Panc1 (cell line): ENCODE measurements at regions of chr19 and their contacts with region 1.

Region 1: GRCh38 chr19:12484371-12485051 is at the start of gene ZNF709:
- DNase-seq: peak; percentile 47
- ATAC-seq: peak; percentile 99
- H3K4me3 ChIP-seq: peak within 1 kb of the TSS; percentile 80 to 89
- H3K27ac ChIP-seq: peak within 1 kb of the TSS; percentile 70
- H3K4me1 ChIP-seq: peaks cover 8% of the 10 kb centered on the region; the same call in 1 of the 2 replicates
- H3K27me3 ChIP-seq: no peaks in the 10 kb centered on the region
- CTCF ChIP-seq: no peak
- total RNA-seq, gene ZNF709: 4.0 TPM

Region 2: DNA sequence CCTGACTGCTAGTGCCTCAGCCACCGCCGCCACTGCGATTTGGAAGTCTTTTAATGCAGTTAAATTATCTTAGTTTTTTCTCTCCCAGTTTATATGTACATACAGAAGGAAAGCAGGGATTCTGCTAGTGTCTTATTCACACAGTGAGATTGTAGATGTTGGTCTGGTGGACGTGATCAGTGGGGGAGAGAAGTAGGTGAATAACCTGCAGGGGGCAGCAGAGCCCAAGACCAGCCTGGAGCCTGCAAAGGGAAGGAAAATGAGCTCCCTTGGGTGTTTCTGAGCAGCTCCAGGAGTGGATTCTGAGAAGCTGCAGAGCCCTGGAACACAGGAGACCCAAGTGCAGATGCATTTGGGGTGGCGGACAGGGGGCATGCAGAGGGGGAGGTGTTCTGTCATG is 393.7 kb before region 1 on chr19:
- CTCF ChIA-PET with region 1: no interaction called
- POLR2A ChIA-PET with region 1: interaction called, 14 read pairs
- in situ Hi-C with region 1: no loop called
- intact Hi-C with region 1: no loop called
- DNase-seq: peak; percentile 10
- ATAC-seq: peak; percentile 46; the same call in 1 of the 2 replicates
- H3K4me3 ChIP-seq: no peak overlapping the region
- H3K27ac ChIP-seq: no peak overlapping the region
- H3K4me1 ChIP-seq: no peaks in the 10 kb centered on the region
- H3K27me3 ChIP-seq: no peaks in the 10 kb centered on the region
- CTCF ChIP-seq: peak; percentile 78